Activated CD4-positive, alpha-beta T cell treated with anti-CD3 and anti-CD28 coated beads, Interleukin-2, amount 10 ng/mL, durations not matched to agents 24 days and 14 days (primary cell): ENCODE measurements at regions of chr12 and their contacts with region 1.

Region 1: DNA sequence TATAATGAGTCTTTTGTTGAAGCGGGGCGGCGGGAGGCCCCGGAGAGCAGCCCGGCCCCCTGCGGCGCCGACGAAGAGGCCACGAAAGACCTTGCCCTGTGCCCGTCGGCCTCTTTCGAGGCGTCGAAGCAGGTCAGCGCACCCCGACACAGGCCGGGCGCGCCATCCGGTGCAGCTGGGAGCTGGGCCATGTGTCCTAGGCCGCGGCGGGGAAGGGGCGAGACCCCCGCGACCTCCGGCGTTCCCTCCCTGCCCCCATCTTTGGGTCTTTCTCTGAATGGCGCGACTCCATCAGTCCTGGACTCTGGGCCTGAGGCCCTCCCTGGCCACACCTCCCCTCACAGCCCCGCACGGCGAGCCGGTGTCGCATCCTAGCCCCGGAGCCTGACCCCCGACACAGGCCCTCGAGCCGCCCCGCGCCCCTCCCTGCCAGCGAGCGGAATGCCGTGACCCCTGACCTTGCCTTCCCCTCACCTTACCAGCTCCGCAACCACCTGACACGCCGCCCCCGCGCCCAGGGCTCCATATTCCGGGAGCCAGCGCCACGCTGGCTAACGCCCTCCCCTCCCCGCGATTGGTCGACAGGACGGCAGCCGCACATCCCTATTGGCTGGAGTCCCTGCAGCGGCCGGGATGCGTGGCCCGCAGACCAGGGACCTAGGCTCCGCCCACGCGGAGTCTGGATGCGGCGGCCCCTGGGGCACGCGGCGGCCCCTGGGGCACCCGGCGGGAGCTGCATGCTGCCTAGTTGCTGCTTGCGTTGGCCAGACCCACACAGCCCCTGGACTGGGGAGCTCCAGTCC is at the start of gene SLC11A2:
- DNase-seq: peak; percentile 98
- H3K4me3 Mint-ChIP-seq: peak within 1 kb of the TSS; percentile 99
- H3K27ac Mint-ChIP-seq: peak within 1 kb of the TSS; percentile 100
- H3K4me1 Mint-ChIP-seq: peaks cover 45% of the 10 kb centered on the region
- H3K27me3 Mint-ChIP-seq: peaks cover 9% of the 10 kb centered on the region
- total RNA-seq, gene SLC11A2: 54.2 and 56.2 TPM in 2 replicates

Region 2: GRCh38 chr12:50400598-50401364 is 625.3 kb before region 1 on chr12 and contains the start of gene LARP4:
- intact Hi-C with region 1: loop called (anchors 10 kb)
- DNase-seq: peak; percentile 98
- H3K4me3 Mint-ChIP-seq: peak within 1 kb of the TSS; percentile 99
- H3K27ac Mint-ChIP-seq: peak within 1 kb of the TSS; percentile 97
- H3K4me1 Mint-ChIP-seq: peaks cover 12% of the 10 kb centered on the region
- H3K27me3 Mint-ChIP-seq: peaks cover 6% of the 10 kb centered on the region
- total RNA-seq, gene LARP4: 117 and 130 TPM in 2 replicates

Region 3: GRCh38 chr12:50504798-50505385 is 521.1 kb before region 1 on chr12 and contains the start of gene DIP2B:
- intact Hi-C with region 1: no loop called
- DNase-seq: peak; percentile 99
- H3K4me3 Mint-ChIP-seq: peak within 1 kb of the TSS; percentile 99
- H3K27ac Mint-ChIP-seq: peak within 1 kb of the TSS; percentile 98
- H3K4me1 Mint-ChIP-seq: peaks cover 45% of the 10 kb centered on the region
- H3K27me3 Mint-ChIP-seq: no peaks in the 10 kb centered on the region
- total RNA-seq, gene DIP2B: 26.4 and 29.4 TPM in 2 replicates

Region 4: GRCh38 chr12:50825372-50825838 is 200.6 kb before region 1 on chr12:
- intact Hi-C with region 1: loop called (anchors 1 kb)
- DNase-seq: no peak
- H3K4me3 Mint-ChIP-seq: no peak overlapping the region
- H3K27ac Mint-ChIP-seq: no peak overlapping the region
- H3K4me1 Mint-ChIP-seq: peaks cover 5% of the 10 kb centered on the region
- H3K27me3 Mint-ChIP-seq: no peaks in the 10 kb centered on the region

Region 5: DNA sequence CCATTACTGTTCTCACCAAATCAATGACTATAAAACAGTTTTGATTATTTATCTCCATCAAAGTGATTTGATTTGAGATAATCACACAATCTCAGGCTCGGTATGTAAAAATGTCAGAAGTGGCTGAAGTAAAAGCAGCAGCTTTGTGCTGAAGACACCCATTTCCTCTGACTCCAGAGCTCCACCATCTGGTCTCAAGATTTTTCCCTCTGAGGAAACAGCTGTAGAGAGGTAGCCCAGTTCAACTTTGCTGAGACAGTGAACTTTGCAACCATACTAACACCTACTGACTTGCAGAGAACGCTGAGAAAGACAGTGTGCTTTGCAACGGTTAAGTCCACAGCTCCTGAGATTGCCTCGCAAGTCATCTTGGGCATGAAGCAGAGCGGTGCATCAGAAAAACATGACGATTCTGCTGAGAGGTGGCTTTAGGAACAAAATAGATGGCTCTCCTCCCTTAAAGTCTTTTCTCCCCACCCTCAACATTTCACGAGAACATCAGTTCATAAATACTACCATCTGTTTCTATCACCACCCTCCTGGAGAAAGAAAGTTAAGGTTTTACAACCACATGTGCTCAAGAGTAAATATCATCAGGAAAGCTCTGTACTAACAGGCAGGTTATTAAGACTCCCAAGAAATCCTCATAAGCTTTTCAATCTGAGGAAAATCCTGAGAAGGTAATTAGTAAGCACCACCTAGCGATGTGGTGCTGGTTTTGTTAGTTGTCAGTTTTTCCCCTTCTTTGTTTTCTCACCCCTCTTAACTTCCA is 38.9 kb before region 1 on chr12:
- intact Hi-C with region 1: loop called (anchors 1 kb)
- DNase-seq: peak; percentile 86
- H3K4me3 Mint-ChIP-seq: no peak overlapping the region
- H3K27ac Mint-ChIP-seq: peak overlapping the region; percentile 55
- H3K4me1 Mint-ChIP-seq: peaks cover 36% of the 10 kb centered on the region
- H3K27me3 Mint-ChIP-seq: no peaks in the 10 kb centered on the region

Region 6: DNA sequence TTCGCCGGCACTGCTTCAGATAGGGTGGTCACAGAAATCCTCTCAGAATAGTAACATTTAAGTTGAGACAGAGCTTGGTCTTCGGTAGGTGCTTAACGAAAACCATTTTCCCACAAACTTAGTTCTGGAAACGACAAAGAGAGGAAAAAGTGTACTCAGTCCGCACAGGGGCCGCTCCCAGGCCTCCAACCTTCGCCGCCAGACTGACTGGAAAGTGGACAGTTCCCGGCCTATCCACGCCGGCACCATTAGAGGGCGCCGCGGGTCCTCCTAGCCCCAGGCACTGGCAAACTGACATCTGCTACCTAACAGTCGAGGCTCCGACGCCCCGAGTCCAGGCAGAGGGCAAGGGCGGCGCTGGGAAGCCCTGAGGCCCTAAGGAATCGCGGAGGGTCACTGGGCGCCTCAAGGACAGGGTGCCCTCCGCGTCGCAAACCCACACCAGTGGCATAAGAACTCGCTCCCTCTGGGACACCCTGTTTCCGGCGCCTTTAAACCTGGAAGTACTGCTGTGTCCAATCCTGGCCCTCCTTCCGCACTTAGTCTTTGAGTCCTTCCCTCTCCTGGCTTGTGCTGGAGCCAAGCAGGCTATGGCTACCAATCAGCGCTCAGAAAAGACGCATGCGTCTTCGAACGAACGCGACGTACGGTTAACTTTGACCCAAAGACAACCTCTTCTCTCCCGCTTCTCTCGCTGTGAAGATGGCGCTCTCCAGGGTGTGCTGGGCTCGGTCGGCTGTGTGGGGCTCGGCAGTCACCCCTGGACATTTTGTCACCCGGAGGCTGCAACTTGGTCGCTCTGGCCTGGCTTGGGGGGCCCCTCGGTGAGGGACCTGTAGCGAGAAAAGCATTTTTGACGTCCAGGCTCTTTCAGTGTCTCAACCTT is 21.9 kb after region 1 on chr12 and contains the start of gene LETMD1:
- intact Hi-C with region 1: loop called (anchors 1 kb)
- DNase-seq: peak; percentile 97
- H3K4me3 Mint-ChIP-seq: peak within 1 kb of the TSS; percentile 93
- H3K27ac Mint-ChIP-seq: peak within 1 kb of the TSS; percentile 90
- H3K4me1 Mint-ChIP-seq: peaks cover 29% of the 10 kb centered on the region
- H3K27me3 Mint-ChIP-seq: no peaks in the 10 kb centered on the region
- total RNA-seq, gene LETMD1: 75.7 and 77.8 TPM in 2 replicates

Region 7: GRCh38 chr12:51238510-51239334 is 212.7 kb after region 1 on chr12 and contains the start of gene DAZAP2:
- intact Hi-C with region 1: loop called (anchors 2 kb)
- DNase-seq: peak; percentile 97
- H3K4me3 Mint-ChIP-seq: peak within 1 kb of the TSS; percentile 93
- H3K27ac Mint-ChIP-seq: peak within 1 kb of the TSS; percentile 100
- H3K4me1 Mint-ChIP-seq: peaks cover 38% of the 10 kb centered on the region
- H3K27me3 Mint-ChIP-seq: peaks cover 1% of the 10 kb centered on the region
- total RNA-seq, gene DAZAP2: 135 and 146 TPM in 2 replicates